ENCODE measurements at regions of chr5 and their contacts with region 1.

Region 1: GRCh38 chr5:167797933-167798332 is 493.5 kb upstream of the WWC1 start:
- DNase-seq: no peak
- ATAC-seq: peak; percentile 11; the same call in 1 of the 2 replicates
- H3K4me3 ChIP-seq: no peak overlapping the region
- H3K27ac ChIP-seq: no peak overlapping the region
- H3K4me1 ChIP-seq: no peaks in the 10 kb centered on the region
- H3K27me3 ChIP-seq: no peaks in the 10 kb centered on the region; the same call in 1 of the 2 replicates
- CTCF ChIP-seq: no peak
- POLR2A ChIP-seq: no peak
- RAD21 ChIP-seq: no peak

Region 2: GRCh38 chr5:167743685-167744464 is 54.1 kb before region 1 on chr5:
- CTCF ChIA-PET with region 1: no interaction called
- POLR2A ChIA-PET with region 1: no interaction called
- dilution Hi-C with region 1: no loop called
- in situ Hi-C with region 1: no loop called
- intact Hi-C with region 1: no loop called
- DNase-seq: peak; percentile 81
- ATAC-seq: peak; percentile 91
- H3K4me3 ChIP-seq: no peak overlapping the region
- H3K27ac ChIP-seq: no peak overlapping the region
- H3K4me1 ChIP-seq: peaks cover 3% of the 10 kb centered on the region
- H3K27me3 ChIP-seq: no peaks in the 10 kb centered on the region
- CTCF ChIP-seq: no peak
- POLR2A ChIP-seq: no peak
- RAD21 ChIP-seq: no peak

Region 3: DNA sequence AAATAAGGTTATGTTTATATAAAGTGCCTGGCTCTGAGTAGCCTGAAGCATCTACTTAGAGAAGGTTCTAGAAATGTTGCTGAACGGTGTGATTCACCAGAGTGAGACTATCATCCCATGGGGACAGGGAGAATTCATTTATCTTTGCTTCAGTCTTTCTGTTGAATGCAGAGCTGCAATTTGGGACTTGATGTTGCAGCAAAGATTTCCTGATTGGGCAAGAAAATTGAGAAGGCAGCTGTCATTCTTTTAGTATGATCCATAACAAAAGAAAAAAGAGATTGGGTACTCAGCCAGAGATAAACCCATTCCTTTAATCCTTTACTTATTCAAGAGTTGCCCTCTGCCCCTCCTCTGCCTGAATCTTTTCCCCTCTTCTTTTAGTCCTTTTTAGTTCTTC is 37.2 kb after region 1 on chr5:
- CTCF ChIA-PET with region 1: no interaction called
- POLR2A ChIA-PET with region 1: no interaction called
- dilution Hi-C with region 1: no loop called
- in situ Hi-C with region 1: no loop called
- intact Hi-C with region 1: no loop called
- DNase-seq: no peak
- ATAC-seq: no peak
- H3K4me3 ChIP-seq: no peak overlapping the region
- H3K27ac ChIP-seq: no peak overlapping the region
- H3K4me1 ChIP-seq: no peaks in the 10 kb centered on the region
- H3K27me3 ChIP-seq: peaks cover 2% of the 10 kb centered on the region; the same call in 1 of the 2 replicates
- CTCF ChIP-seq: no peak
- POLR2A ChIP-seq: no peak
- RAD21 ChIP-seq: no peak

Region 4: GRCh38 chr5:167896814-167897213 is 98.9 kb after region 1 on chr5:
- CTCF ChIA-PET with region 1: no interaction called
- POLR2A ChIA-PET with region 1: no interaction called
- dilution Hi-C with region 1: no loop called
- in situ Hi-C with region 1: no loop called
- intact Hi-C with region 1: loop called (anchors 1 kb)
- DNase-seq: no peak
- ATAC-seq: no peak
- H3K4me3 ChIP-seq: no peak overlapping the region
- H3K27ac ChIP-seq: no peak overlapping the region
- H3K4me1 ChIP-seq: no peaks in the 10 kb centered on the region; the same call in 1 of the 2 replicates
- H3K27me3 ChIP-seq: no peaks in the 10 kb centered on the region; the same call in 1 of the 2 replicates
- CTCF ChIP-seq: no peak
- POLR2A ChIP-seq: no peak
- RAD21 ChIP-seq: no peak

Measured in IMR-90 (cell line).